Activated CD4-positive, alpha-beta memory T cell treated with anti-CD3 and anti-CD28 coated beads for 36 hours (primary cell): ENCODE measurements at regions of chr2 and their contacts with region 1.

Region 1: GRCh38 chr2:127081826-127082633 is 24.9 kb downstream of the BIN1 start:
- DNase-seq: peak; percentile 84
- H3K4me3 Mint-ChIP-seq: peak overlapping the region; percentile 86
- H3K27ac Mint-ChIP-seq: peak overlapping the region; percentile 95
- H3K4me1 Mint-ChIP-seq: peaks cover 53% of the 10 kb centered on the region
- H3K27me3 Mint-ChIP-seq: no peaks in the 10 kb centered on the region

Region 2: GRCh38 chr2:126657636-126658318 is 424.3 kb before region 1 on chr2:
- CTCF ChIA-PET with region 1: no interaction called
- POLR2A ChIA-PET with region 1: no interaction called
- intact Hi-C with region 1: loop called (anchors 5 kb)
- DNase-seq: peak; percentile 89
- H3K4me3 Mint-ChIP-seq: peak overlapping the region; percentile 91
- H3K27ac Mint-ChIP-seq: peak overlapping the region; percentile 97
- H3K4me1 Mint-ChIP-seq: peaks cover 52% of the 10 kb centered on the region
- H3K27me3 Mint-ChIP-seq: no peaks in the 10 kb centered on the region

Region 3: DNA sequence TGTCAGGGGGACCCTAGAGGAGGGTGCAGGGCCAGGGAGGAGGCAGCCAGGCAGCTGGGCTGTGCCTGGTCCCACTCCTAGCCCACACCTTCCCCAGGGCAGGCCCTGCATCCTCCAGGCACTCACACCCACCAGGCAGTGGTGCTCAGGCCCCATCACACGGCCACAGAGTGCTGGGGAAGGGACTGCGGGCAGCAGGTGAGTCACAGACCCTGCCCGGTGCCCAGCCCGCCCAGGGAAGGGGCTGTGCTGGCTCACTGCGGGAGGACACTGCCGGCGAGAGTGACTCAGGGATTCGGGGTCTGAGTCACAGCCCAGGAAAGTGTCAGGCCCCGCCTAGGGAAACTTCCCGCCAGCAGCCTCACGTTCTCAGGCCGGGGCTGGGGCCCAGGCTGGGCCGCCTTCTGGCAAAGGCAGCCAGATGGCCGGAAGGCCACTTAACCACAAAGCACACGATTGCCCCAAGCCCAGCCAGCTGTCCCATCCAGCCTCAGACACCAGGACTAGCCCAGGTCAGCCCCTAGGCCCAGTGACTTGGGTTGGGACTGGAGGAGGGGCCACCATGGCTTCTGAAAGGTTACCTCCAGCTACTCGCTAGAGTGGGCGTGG is 17.3 kb before region 1 on chr2:
- CTCF ChIA-PET with region 1: interaction called, 61 read pairs
- POLR2A ChIA-PET with region 1: interaction called, 13 read pairs
- intact Hi-C with region 1: loop called (anchors 1 kb)
- DNase-seq: peak; percentile 93
- H3K4me3 Mint-ChIP-seq: no peak overlapping the region
- H3K27ac Mint-ChIP-seq: peak overlapping the region; percentile 75
- H3K4me1 Mint-ChIP-seq: peaks cover 24% of the 10 kb centered on the region
- H3K27me3 Mint-ChIP-seq: no peaks in the 10 kb centered on the region

Region 4: DNA sequence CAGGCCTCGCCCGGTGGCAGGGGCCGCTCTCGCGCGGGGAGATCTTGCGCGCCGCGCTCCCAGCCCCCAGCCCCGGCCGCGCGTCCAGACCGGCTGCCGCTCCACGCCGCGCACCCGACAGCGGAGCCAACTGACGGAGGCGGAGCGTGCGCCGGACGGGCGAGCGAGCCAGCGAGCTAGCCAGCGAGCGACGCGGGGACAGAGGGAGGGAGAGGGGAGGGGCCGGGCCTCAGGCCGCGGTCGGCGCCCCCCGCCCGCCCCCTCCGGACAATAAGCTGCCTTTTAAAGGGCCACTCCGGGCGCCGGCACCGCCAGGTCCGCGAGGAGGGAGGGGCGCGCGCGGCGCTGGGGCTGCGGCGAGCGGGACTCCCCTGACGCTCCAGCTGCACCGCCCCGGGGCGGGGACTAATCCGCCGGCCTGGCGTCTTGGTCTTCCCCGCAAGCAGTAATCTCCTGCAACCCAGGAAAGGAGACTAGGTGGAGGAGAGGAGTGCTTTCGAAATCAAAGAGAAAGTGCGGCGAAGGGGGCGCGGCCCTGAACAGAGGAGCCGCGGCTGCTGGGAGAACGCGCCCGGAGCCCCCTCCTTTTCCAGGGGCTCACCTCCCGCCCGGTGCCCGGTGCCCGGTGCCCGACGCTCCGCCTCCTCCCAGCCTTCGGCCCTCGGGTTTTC is 25.1 kb after region 1 on chr2 and contains the start of gene BIN1:
- CTCF ChIA-PET with region 1: interaction called, 8 read pairs
- POLR2A ChIA-PET with region 1: interaction called, 5 read pairs
- intact Hi-C with region 1: loop called (anchors 1 kb)
- DNase-seq: peak; percentile 82
- H3K4me3 Mint-ChIP-seq: peak within 1 kb of the TSS; percentile 70
- H3K27ac Mint-ChIP-seq: no peak within 1 kb of the TSS
- H3K4me1 Mint-ChIP-seq: peaks cover 4% of the 10 kb centered on the region
- H3K27me3 Mint-ChIP-seq: peaks cover 12% of the 10 kb centered on the region
- total RNA-seq, gene BIN1: 55.4 to 58.2 TPM

Region 5: GRCh38 chr2:127226520-127227263 is 144.7 kb after region 1 on chr2:
- CTCF ChIA-PET with region 1: no interaction called
- POLR2A ChIA-PET with region 1: no interaction called
- intact Hi-C with region 1: loop called (anchors 2 kb)
- DNase-seq: peak; percentile 87
- H3K4me3 Mint-ChIP-seq: peak overlapping the region; percentile 53
- H3K27ac Mint-ChIP-seq: peak overlapping the region; percentile 73
- H3K4me1 Mint-ChIP-seq: peaks cover 18% of the 10 kb centered on the region
- H3K27me3 Mint-ChIP-seq: peaks cover 40% of the 10 kb centered on the region

Region 6: DNA sequence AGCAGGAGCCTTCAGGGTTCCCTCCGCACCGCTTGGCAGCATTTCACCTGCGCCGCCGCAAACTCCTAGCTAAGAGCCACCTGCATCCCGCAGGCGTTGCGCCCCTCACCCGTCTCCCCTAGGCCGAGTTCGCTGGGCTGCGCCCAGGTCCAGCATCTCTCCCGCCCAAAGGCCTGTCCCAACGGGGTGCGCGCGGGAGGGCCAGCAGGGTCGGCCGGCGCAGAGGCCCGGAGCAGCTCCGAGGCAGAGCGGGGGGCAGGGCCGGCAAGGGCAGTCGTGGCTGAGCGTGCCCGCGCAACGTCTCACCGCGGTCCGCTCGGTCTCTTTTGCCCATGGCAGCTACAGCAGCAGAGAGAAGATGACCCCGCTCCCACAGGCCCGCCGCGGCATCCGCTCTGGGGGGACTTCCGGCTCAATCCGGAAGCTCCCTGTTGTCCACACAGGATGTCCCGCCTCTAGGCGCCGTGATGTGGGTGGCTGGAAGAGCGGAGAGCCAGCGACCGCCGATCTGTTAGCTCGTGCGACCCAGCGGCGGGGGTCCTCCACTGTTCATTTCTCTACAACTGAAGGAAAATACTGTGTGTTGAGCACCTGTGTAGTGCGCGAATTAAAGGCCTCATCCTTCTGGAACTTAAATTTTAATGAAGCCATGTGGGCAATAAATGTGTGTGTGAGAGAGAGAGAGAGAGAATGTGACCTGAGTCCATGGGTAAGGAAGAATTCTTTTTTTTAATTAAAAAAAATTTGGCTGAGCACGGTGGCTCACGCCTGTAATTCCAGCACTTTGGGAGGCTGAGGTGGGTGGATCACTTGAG is 211.9 kb after region 1 on chr2 and contains the start of gene ERCC3:
- CTCF ChIA-PET with region 1: interaction called, 3 read pairs
- POLR2A ChIA-PET with region 1: interaction called, 10 read pairs
- intact Hi-C with region 1: no loop called
- DNase-seq: peak; percentile 89
- H3K4me3 Mint-ChIP-seq: peak within 1 kb of the TSS; percentile 100
- H3K27ac Mint-ChIP-seq: peak within 1 kb of the TSS; percentile 97
- H3K4me1 Mint-ChIP-seq: peaks cover 28% of the 10 kb centered on the region
- H3K27me3 Mint-ChIP-seq: no peaks in the 10 kb centered on the region
- total RNA-seq, gene ERCC3: 46.1 to 47.3 TPM